Lower leg skin (tissue), 4 donors: ENCODE measurements at regions of chr5 and their contacts with region 1.

Region 1: GRCh38 chr5:174311531-174312269 is 266.2 kb downstream of the NSG2 start:
- DNase-seq: peak; percentile 39 to 88
- H3K4me3 ChIP-seq: no peak overlapping the region
- CTCF ChIP-seq: no peak
- POLR2A ChIP-seq: no peak

Region 2: GRCh38 chr5:173615884-173616576 is 695.7 kb before region 1 on chr5:
- intact Hi-C with region 1: loop called (anchors 10 kb)
- DNase-seq: peak; percentile 71 to 90
- H3K4me3 ChIP-seq: peak overlapping the region; percentile 93
- CTCF ChIP-seq: no peak
- POLR2A ChIP-seq: no peak

Region 3: GRCh38 chr5:174045470-174046025 is 266.2 kb before region 1 on chr5 and contains the start of gene NSG2:
- intact Hi-C with region 1: loop called (anchors 5 kb)
- DNase-seq: peak; percentile 28 to 86
- H3K4me3 ChIP-seq: no peak within 1 kb of the TSS
- CTCF ChIP-seq: no peak
- POLR2A ChIP-seq: no peak
- total RNA-seq, gene NSG2: not detected

Region 4: GRCh38 chr5:174283211-174284005 is 28.3 kb before region 1 on chr5:
- intact Hi-C with region 1: no loop called
- DNase-seq: peak in 1 of 2 donors; percentile 25
- H3K4me3 ChIP-seq: no peak overlapping the region
- CTCF ChIP-seq: no peak
- POLR2A ChIP-seq: no peak